ENCODE measurements at regions of chr15 and their contacts with region 1.

Region 1: GRCh38 chr15:85008474-85009260 is 27.0 kb downstream of the PDE8A start:
- DNase-seq: no peak
- ATAC-seq: peak in 1 of 2 experiments; percentile 26; a peak in 3 of 6 replicates
- H3K4me3 ChIP-seq: no peak overlapping the region
- H3K27ac ChIP-seq: peak overlapping the region; percentile 19 to 58; a peak in 5 of 6 replicates
- H3K4me1 ChIP-seq: peaks cover 69% of the 10 kb centered on the region
- CTCF ChIP-seq: no peak
- EP300 ChIP-seq: no peak
- POLR2A ChIP-seq: no peak
- RAD21 ChIP-seq: no peak

Region 2: DNA sequence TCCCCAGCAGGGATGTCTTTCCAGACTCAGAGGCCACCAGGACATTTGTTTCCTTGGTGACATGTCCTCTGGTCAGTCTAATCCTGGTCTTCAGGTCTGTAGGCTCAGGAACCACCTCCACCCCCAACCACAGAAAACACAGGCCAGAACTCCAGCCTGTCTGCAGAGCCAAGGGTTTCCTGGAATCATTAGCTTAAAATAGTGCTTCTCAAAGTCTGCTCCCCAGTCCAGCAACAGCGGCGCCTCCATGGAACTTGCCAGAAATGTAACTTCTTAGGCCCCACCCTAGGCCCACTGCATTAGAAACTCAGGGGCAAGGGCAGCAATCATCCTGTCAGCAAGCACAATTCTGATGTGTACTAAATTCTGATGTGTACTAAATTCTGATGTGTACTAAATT is 104.2 kb before region 1 on chr15:
- CTCF ChIA-PET with region 1: no interaction called
- POLR2A ChIA-PET with region 1: no interaction called
- DNase-seq: no peak
- ATAC-seq: no peak
- H3K4me3 ChIP-seq: no peak overlapping the region
- H3K27ac ChIP-seq: peak overlapping the region; percentile 3 to 71; a peak in 5 of 6 replicates
- H3K4me1 ChIP-seq: peaks cover 33% of the 10 kb centered on the region
- CTCF ChIP-seq: no peak
- EP300 ChIP-seq: no peak
- POLR2A ChIP-seq: no peak
- RAD21 ChIP-seq: no peak

Region 3: GRCh38 chr15:84992157-84992944 is 16.3 kb before region 1 on chr15:
- CTCF ChIA-PET with region 1: interaction called, 10 read pairs
- POLR2A ChIA-PET with region 1: no interaction called
- DNase-seq: peak; percentile 76 to 80
- ATAC-seq: peak; percentile 93 to 96
- H3K4me3 ChIP-seq: no peak overlapping the region
- H3K27ac ChIP-seq: peak overlapping the region; percentile 33 to 65; a peak in 5 of 6 replicates
- H3K4me1 ChIP-seq: peaks cover 64% of the 10 kb centered on the region
- CTCF ChIP-seq: no peak
- EP300 ChIP-seq: no peak
- POLR2A ChIP-seq: no peak
- RAD21 ChIP-seq: no peak

Measured in A549 (cell line).